ENCODE measurements at regions of chr4 and their contacts with region 1.

Region 1: DNA sequence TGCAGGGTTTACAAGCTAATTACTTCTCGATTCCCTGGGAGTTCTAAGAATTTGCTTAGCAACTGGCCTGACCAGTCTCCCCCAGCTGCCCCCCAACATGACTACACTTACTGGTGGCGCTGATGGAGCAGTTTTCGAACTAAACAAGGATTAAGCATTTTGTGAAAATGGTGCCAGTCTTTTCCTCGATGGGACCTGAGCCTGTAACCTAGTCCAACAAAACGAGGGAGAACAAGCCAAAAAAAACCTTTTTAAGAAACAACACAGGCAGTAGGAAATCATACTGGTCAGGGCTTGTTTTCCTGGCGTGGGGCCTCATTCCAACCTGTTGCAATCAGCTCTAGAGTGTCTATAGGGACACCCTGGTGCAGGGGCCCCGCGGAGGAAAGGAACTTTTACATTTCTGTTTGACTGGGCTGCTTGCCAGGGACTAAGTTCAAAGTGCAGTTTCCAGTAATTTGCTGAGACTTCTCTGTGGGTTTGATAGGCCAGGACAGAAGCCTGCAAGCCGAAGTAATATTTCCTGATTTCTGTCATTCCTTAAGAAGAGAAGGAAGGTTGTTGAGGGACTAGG is 158.7 kb downstream of the SPRY1 start:
- DNase-seq: peak; percentile 80
- ATAC-seq: peak; percentile 95

Region 2: GRCh38 chr4:123744664-123745290 is 189.5 kb after region 1 on chr4:
- intact Hi-C with region 1: loop called (anchors 10 kb)
- DNase-seq: no peak
- ATAC-seq: peak; percentile 75

Measured in Right ventricle myocardium inferior (tissue), 1 donor.